ENCODE measurements at regions of chr10 and their contacts with region 1.

Region 1: GRCh38 chr10:31782701-31783100 is 145.9 kb downstream of the ARHGAP12 start:
- DNase-seq: no peak
- ATAC-seq: no peak
- H3K4me3 ChIP-seq: no peak overlapping the region
- H3K27ac ChIP-seq: no peak overlapping the region
- H3K4me1 ChIP-seq: no peaks in the 10 kb centered on the region
- H3K27me3 ChIP-seq: no peaks in the 10 kb centered on the region

Region 2: DNA sequence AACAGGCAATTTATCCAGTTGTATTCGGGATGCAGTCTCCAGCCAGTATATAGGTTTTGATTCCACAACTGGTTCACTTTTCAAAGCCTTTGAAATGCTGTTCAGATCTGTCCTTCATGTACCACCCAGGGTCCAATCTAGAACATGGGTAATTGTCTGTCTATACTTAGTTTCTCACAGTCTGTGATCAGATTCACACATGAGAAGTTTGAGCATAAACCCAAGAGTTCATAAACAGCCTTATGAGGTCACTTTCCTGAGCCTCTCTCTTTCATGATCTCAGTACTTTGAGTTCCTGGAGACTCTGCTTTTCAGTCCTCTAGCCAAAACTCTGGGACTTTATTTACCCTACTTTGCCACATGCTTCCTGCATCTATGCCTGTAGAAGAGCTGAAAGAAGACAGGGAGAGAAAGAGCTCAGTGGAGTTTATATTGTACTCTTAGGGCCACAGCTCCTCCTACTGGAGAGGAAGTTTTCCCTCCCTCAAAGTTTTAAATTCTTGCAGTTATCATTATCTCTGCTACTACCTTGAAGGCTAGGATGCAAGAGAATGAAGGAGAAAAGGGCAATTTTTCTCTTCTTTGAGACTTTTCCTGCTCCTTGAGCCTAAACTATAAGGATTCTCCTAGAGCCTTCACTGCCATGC is 291.7 kb before region 1 on chr10:
- intact Hi-C with region 1: loop called in 1 of 2 experiments (anchors 10 kb)
- DNase-seq: no peak
- ATAC-seq: peak; percentile 22
- H3K4me3 ChIP-seq: no peak overlapping the region
- H3K27ac ChIP-seq: no peak overlapping the region
- H3K4me1 ChIP-seq: no peaks in the 10 kb centered on the region
- H3K27me3 ChIP-seq: no peaks in the 10 kb centered on the region